AG04449 (cell line): ENCODE measurements at regions of chr21 and their contacts with region 1.

Region 1: GRCh38 chr21:36854391-36854790 is 112.1 kb downstream of the HLCS start:
- DNase-seq: no peak
- H3K4me3 ChIP-seq: no peak overlapping the region
- CTCF ChIP-seq: peak; percentile 56

Region 2: DNA sequence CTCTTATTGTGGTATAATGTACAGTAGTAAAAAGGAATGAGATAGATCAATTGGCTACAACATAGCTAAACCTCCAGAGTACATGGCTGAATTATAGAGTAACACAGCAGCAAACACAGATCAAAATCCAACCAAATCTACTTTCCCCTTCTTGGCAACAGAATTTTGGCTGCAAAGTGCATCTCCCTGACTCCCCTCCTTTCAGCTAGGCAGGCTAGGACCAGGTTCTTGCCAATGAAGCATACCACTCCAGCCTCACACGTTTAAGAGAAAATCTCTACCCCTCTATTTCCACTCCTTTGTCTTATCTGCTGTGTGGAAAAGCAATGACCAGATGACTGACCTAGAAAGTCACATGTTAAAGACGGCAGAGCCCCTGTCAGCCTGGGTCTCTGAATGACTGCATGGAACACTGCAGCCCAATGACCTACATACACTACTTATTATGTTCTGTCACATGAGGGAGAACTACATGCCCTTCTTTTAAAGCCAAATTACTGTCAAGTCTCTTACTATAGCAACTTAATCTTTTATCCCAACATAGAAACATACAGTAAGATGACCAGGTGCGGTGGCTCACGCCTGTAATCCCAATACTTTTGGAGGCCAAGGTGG is 13.0 kb after region 1 on chr21:
- CTCF ChIA-PET with region 1: interaction called, 33 read pairs
- POLR2A ChIA-PET with region 1: no interaction called
- DNase-seq: no peak
- H3K4me3 ChIP-seq: no peak overlapping the region
- CTCF ChIP-seq: no peak

Region 3: GRCh38 chr21:36879827-36880226 is 25.4 kb after region 1 on chr21:
- CTCF ChIA-PET with region 1: interaction called, 10 read pairs
- POLR2A ChIA-PET with region 1: no interaction called
- DNase-seq: no peak
- H3K4me3 ChIP-seq: no peak overlapping the region
- CTCF ChIP-seq: no peak